Caco-2 (cell line): ENCODE measurements at regions of chr1 and their contacts with region 1.

Region 1: GRCh38 chr1:112975336-112975735 is 19.3 kb upstream of the SLC16A1 start:
- DNase-seq: peak in 1 of 2 experiments; percentile 31
- H3K4me3 ChIP-seq: no peak overlapping the region
- H3K4me3 Mint-ChIP-seq: no peak overlapping the region
- H3K27ac Mint-ChIP-seq: no peak overlapping the region
- H3K4me1 ChIP-seq: peaks cover 14% of the 10 kb centered on the region; the same call in 1 of the 2 replicates
- H3K4me1 Mint-ChIP-seq: no peaks in the 10 kb centered on the region
- H3K27me3 ChIP-seq: no peaks in the 10 kb centered on the region
- H3K27me3 Mint-ChIP-seq: no peaks in the 10 kb centered on the region
- CTCF ChIP-seq: no peak

Region 2: DNA sequence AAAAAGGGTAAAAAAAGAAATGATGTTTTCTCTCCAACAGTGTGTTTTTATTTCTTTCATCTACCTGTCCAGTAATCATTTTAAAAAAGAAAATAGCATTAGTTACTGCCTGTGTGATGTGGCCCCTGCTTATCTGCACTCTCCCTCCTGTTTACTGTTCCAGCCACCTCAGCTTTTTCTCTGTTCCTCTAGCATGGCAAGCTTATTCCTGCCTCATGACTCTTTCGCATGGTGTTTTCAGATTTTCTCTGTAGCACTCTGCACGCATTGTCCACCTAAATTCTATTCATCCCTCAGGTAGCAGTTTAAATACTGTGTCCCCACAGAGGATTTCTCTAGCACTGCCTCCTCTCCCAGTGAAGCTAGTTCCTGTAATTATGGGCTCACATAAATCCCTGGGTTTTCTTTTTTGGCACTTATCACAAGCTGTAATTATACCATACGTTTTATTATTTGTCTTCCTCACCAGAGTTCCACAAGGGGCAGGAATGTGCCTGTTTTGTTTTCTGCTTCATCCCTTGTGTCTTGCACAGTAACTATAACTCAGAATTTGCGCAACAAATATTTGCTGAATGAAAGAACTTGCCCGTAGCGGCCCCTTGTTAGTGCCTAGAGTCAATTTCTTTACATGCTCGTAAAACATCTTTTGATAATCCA is 46.2 kb after region 1 on chr1:
- CTCF ChIA-PET with region 1: no interaction called
- POLR2A ChIA-PET with region 1: no interaction called
- intact Hi-C with region 1: loop called (anchors 1 kb)
- DNase-seq: peak; percentile 46 to 54
- H3K4me3 ChIP-seq: no peak overlapping the region
- H3K4me3 Mint-ChIP-seq: peak overlapping the region; percentile 18
- H3K27ac Mint-ChIP-seq: peak overlapping the region; percentile 64
- H3K4me1 ChIP-seq: peaks cover 8% of the 10 kb centered on the region
- H3K4me1 Mint-ChIP-seq: peaks cover 11% of the 10 kb centered on the region
- H3K27me3 ChIP-seq: no peaks in the 10 kb centered on the region
- H3K27me3 Mint-ChIP-seq: no peaks in the 10 kb centered on the region
- CTCF ChIP-seq: no peak

Region 3: DNA sequence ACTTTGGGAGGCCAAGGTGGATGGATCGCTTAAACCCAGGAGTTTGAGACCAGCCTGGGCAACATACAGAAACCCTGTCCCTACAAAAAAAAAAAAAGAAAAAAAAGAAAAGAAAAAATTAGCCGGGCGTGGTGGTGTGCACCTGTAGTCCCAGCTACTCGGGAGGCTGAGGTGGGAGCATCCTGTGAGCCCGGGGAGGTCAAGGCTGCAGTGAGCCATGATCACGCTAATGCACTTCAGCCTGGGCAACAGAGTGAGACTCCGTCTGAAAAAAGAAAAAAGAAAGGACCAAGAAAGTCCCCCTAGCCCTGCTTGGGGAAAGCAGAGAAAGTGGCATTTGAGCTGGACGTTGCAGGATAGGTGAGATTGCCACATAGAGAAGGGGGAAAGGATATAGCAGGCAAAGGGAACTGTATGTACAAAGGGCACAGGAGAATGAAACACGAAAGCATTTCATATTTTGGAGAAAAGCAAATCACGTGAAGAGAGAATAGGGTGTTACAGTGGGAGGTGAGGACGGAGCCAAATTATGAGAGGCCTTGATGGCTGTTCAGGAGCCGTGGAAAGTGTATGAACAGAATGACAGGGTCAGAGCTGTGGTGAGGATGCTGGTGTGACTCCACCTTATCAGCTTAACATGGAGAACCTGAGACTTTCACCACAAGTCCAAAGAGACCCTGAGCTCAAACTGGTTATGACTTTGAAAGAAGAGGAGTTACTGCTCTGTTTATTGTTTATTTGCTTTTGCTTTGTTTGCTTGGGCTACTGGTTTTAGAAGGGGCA is 78.2 kb after region 1 on chr1:
- CTCF ChIA-PET with region 1: no interaction called
- POLR2A ChIA-PET with region 1: no interaction called
- intact Hi-C with region 1: no loop called
- DNase-seq: no peak
- H3K4me3 ChIP-seq: no peak overlapping the region
- H3K4me3 Mint-ChIP-seq: no peak overlapping the region
- H3K27ac Mint-ChIP-seq: no peak overlapping the region
- H3K4me1 ChIP-seq: no peaks in the 10 kb centered on the region
- H3K4me1 Mint-ChIP-seq: no peaks in the 10 kb centered on the region
- H3K27me3 ChIP-seq: no peaks in the 10 kb centered on the region
- H3K27me3 Mint-ChIP-seq: no peaks in the 10 kb centered on the region
- CTCF ChIP-seq: no peak